Ascending aorta (tissue), 2 donors: ENCODE measurements at regions of chr3 and their contacts with region 1.

Region 1: DNA sequence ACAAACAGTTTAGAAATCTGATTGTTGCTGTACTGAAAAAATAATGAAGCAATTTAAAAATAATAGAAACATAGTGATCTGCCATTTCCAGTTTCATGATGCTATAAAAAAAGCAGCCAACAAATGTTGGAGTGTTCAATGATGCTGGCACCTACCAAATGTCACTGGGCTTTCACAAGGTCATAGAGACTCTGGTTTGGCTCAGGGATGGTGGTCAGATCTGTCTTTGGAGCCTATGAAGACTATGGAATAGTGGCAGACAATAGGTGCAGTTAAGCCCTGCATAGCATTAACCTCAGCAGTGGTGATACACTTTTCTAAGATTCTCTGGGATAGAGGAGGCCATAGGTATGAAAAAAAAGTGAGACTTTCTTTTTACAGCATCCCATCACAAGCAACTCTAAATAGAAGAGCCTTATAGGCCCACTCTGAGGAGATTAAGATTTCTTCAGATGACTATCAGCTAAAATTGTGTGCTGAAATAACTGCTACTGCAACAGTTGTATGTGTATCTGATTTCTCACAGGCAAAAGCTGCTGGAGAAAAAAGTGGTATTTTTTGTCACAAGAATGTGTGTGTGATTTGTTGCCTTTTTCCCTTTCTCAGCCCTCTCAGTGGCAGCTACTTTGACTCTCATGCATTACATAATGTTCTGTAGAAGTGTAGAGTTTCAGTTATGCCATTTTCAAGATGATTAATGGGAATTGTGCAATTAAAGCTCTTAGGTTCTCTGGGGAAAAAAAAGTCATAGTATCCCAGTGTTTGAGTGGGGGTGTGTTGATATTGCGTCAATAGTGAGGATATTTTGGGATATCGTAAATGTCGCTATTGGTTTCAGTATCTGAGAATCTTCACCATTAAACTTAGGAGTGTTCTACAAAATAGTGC is 137.4 kb downstream of the MBNL1 start:
- DNase-seq: no peak
- H3K4me3 ChIP-seq: peak overlapping the region; percentile 34 to 48
- H3K27ac ChIP-seq: peak overlapping the region; percentile 81 to 83
- H3K4me1 ChIP-seq: peaks cover 16 to 63% of the 10 kb centered on the region in 2 donors
- H3K27me3 ChIP-seq: no peaks in the 10 kb centered on the region
- CTCF ChIP-seq: no peak

Region 2: GRCh38 chr3:152278756-152279427 is 127.3 kb before region 1 on chr3:
- intact Hi-C with region 1: loop called (anchors 5 kb)
- DNase-seq: no peak
- H3K4me3 ChIP-seq: peak overlapping the region; percentile 28 to 76
- H3K27ac ChIP-seq: peak overlapping the region; percentile 60 to 94
- H3K4me1 ChIP-seq: peaks cover 17 to 67% of the 10 kb centered on the region in 2 donors
- H3K27me3 ChIP-seq: no peaks in the 10 kb centered on the region
- CTCF ChIP-seq: no peak

Region 3: DNA sequence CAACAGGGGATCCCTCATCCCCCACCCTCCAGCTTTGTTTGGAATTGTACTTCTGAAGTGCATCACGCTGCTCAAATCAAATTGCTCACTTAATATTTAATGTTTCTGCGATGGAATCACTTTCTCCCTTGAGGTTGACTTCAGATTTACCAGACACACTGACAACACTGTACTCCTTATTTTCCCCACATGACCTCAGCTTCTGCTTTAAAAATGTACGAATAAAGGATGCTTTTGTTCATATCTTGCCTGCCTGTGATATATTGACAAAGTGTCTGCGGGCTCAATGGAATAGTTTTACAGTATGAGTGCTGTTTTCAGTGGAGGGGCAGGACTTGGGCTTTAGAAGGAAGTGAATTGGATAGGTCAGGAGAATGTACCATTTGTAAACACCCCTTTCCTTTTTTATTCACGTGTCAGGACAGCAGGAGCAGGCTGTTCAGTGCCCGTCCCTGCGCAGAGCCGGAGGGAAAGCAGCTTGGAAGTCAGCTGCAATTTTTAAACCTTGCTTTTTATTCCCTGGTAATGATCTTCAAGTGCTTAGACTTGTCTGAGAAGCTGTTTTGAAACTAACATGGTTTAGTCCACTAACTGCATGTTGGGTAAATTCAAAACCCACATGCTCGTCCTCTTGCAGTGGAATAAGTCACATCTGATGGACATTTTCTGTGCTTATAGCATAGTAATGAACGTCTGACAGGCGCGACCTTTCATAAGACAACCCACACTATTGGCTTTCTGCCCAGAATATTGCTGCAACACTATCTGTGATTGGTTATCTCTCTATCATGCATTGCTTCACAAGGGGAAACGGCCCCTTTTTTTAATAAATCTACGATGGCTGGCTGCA is 107.5 kb before region 1 on chr3:
- intact Hi-C with region 1: loop called (anchors 10 kb)
- DNase-seq: peak in 1 of 2 donors; percentile 84
- H3K4me3 ChIP-seq: peak overlapping the region; percentile 49 to 52
- H3K27ac ChIP-seq: peak overlapping the region; percentile 77 to 83
- H3K4me1 ChIP-seq: peaks cover 8 to 51% of the 10 kb centered on the region in 2 donors
- H3K27me3 ChIP-seq: no peaks in the 10 kb centered on the region
- CTCF ChIP-seq: no peak

Region 4: DNA sequence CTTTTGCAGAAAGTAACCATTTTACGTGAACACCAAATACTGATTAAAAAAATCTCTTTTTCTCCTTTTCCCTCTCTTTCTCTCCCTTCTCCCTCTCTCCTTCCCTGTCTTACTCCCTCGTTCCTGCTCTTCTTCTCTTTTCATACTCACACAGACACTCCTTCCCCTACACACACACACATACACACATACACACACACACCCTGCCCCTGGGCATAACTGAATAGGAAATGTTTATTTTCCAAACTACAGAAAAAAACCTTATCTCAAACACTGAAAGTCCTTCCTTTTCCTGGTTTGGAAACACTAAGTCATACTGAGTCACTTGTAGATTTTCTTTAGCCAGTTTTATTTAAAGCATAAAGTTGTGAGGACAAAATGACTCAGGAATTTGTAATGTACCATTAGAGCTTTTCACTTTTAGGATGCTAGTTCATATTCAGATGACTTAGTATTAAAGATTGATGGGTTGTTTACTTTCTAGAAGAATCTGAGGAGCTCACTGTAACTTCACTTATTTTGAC is 75.1 kb before region 1 on chr3:
- intact Hi-C with region 1: loop called (anchors 5 kb)
- DNase-seq: no peak
- H3K4me3 ChIP-seq: peak overlapping the region in 1 of 2 donors; percentile 16
- H3K27ac ChIP-seq: peak overlapping the region; percentile 79 to 91
- H3K4me1 ChIP-seq: peaks cover 7 to 75% of the 10 kb centered on the region in 2 donors
- H3K27me3 ChIP-seq: no peaks in the 10 kb centered on the region
- CTCF ChIP-seq: no peak